Activated B cell treated with CpG ODN at 0.5 μM for 24 hours (primary cell): ENCODE measurements at regions of chr2 and their contacts with region 1.

Region 1: DNA sequence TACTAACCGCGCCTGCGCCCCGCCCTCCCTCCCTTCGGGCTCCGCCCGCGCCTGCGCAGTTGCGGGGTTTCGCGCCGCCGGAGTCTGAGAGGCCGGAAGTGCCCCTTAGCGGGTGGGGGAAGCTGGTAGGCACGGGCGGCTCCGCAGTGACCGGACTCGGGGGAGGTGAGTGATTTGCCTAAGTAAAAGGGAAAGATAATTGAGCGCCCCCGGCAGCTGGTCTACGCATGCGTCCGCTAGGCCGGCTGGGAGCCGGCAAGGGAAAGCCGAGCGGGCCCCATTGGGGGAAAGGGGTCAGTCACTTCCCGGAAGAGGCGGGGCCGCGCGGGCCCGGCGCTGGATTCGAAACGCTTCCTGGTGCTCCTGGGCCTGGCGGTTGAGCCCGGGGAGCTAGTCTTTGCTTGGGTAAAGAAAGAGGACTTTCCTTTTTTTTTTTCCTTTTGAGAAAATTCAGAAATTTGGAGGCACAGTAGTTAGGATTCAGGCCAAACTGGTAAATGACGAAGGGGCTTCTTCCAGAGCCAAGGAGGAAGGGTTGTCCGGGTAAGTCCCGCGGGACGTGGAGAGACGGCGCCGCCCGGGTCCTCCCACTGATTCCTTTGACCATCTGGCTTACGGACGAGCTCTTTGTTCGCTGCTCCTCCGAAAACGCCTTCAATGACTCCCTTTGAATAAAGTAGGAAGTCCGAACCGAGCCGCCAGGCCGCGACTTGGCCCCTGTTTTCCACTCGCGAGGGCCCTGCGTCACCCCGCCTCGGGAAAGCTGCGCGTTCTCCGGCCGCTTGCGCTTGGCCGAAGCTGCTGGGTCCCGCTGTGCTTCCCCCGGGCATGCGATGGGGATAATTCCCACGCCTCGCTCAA is at the starts of genes GEN1 and SMC6:
- DNase-seq: peak; percentile 90
- ATAC-seq: peak; percentile 83
- H3K4me3 Mint-ChIP-seq: peak within 1 kb of the TSS; percentile 95
- H3K27ac Mint-ChIP-seq: peak within 1 kb of the TSS; percentile 95
- H3K4me1 Mint-ChIP-seq: peaks cover 61% of the 10 kb centered on the region
- H3K27me3 Mint-ChIP-seq: no peaks in the 10 kb centered on the region
- CTCF ChIP-seq: no peak
- total RNA-seq, gene GEN1: 141 and 163 TPM in 2 replicates
- total RNA-seq, gene SMC6: 121 and 127 TPM in 2 replicates

Region 2: DNA sequence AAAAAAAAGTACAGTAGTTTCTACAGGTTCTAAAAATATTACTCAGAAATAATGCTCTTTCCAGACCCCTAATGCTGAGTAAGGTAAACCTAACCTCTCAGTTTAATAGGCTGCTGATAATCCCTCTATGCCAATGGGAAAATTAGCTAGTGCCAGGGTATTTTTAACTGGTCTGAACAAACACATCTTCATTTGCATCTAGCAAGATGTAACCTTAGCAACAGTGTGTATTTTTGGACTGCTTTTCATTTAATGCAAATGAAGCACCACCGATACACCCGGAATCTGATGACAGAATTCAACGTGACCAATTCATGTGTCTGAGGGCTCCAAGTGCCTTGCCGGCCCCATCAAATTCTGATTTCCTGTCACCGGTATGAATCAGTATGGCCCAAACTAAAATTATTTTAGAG is 1041.0 kb before region 1 on chr2:
- CTCF ChIA-PET with region 1: no interaction called
- POLR2A ChIA-PET with region 1: no interaction called
- intact Hi-C with region 1: loop called (anchors 5 kb)
- DNase-seq: no peak
- ATAC-seq: peak; percentile 80
- H3K4me3 Mint-ChIP-seq: peak overlapping the region; percentile 72
- H3K27ac Mint-ChIP-seq: peak overlapping the region; percentile 90
- H3K4me1 Mint-ChIP-seq: peaks cover 58% of the 10 kb centered on the region
- H3K27me3 Mint-ChIP-seq: no peaks in the 10 kb centered on the region
- CTCF ChIP-seq: no peak

Region 3: DNA sequence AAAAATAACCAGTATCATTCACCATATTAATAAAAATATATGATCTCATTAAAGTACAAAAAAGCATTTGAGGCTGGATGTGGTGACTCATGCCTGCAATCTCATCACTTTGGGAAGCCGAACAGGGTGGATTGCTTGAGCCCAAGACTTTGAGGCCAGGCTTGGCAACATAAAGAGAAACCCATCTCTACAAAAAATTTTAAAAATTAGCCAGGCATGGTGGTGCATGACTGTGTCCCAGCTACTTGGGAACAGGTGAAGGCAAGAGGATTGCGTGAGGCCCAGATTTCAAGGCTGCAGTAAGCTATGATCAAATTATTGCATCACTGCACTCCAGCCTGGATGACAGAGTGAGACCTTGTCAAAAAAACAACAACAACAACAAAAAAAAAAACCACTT is 311.7 kb before region 1 on chr2:
- CTCF ChIA-PET with region 1: no interaction called
- POLR2A ChIA-PET with region 1: no interaction called
- intact Hi-C with region 1: no loop called
- DNase-seq: no peak
- ATAC-seq: no peak
- H3K4me3 Mint-ChIP-seq: no peak overlapping the region
- H3K27ac Mint-ChIP-seq: no peak overlapping the region
- H3K4me1 Mint-ChIP-seq: no peaks in the 10 kb centered on the region
- H3K27me3 Mint-ChIP-seq: peaks cover 12% of the 10 kb centered on the region
- CTCF ChIP-seq: no peak

Region 4: GRCh38 chr2:17719562-17720371 is 34.3 kb before region 1 on chr2:
- CTCF ChIA-PET with region 1: interaction called, 6 read pairs
- POLR2A ChIA-PET with region 1: no interaction called
- intact Hi-C with region 1: loop called (anchors 5 kb)
- DNase-seq: no peak
- ATAC-seq: peak; percentile 70
- H3K4me3 Mint-ChIP-seq: no peak overlapping the region
- H3K27ac Mint-ChIP-seq: peak overlapping the region; percentile 78
- H3K4me1 Mint-ChIP-seq: peaks cover 3% of the 10 kb centered on the region
- H3K27me3 Mint-ChIP-seq: no peaks in the 10 kb centered on the region
- CTCF ChIP-seq: peak; percentile 44

Region 5: GRCh38 chr2:17771956-17772355 is 17.9 kb after region 1 on chr2:
- CTCF ChIA-PET with region 1: no interaction called
- POLR2A ChIA-PET with region 1: interaction called, 10 read pairs
- intact Hi-C with region 1: loop called (anchors 2 kb)
- DNase-seq: no peak
- ATAC-seq: no peak
- H3K4me3 Mint-ChIP-seq: no peak overlapping the region
- H3K27ac Mint-ChIP-seq: no peak overlapping the region
- H3K4me1 Mint-ChIP-seq: no peaks in the 10 kb centered on the region
- H3K27me3 Mint-ChIP-seq: no peaks in the 10 kb centered on the region
- CTCF ChIP-seq: no peak

Region 6: DNA sequence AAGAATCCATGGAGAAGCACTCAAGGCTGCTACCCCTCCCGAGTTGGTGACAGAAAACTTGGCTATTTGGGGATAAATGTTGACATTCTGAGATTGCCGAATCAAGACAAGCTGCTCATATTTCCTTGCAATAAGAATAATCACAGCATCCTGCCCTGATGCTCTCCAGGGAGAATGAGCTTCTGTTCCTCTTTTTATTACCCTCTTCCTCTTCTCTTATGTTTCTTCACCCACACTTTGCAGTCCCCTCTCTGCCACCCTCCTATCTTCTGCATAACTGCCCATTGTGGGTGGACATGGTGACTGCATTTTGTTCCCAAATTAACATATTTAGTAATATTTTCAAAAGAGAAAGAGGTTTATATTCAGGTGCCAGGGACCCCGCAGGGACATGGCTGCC is 50.3 kb after region 1 on chr2:
- CTCF ChIA-PET with region 1: interaction called, 4 read pairs
- POLR2A ChIA-PET with region 1: interaction called, 118 read pairs
- intact Hi-C with region 1: loop called (anchors 1 kb)
- DNase-seq: no peak
- ATAC-seq: peak; percentile 82
- H3K4me3 Mint-ChIP-seq: peak overlapping the region; percentile 76
- H3K27ac Mint-ChIP-seq: peak overlapping the region; percentile 97
- H3K4me1 Mint-ChIP-seq: peaks cover 84% of the 10 kb centered on the region
- H3K27me3 Mint-ChIP-seq: no peaks in the 10 kb centered on the region
- CTCF ChIP-seq: no peak

Region 7: DNA sequence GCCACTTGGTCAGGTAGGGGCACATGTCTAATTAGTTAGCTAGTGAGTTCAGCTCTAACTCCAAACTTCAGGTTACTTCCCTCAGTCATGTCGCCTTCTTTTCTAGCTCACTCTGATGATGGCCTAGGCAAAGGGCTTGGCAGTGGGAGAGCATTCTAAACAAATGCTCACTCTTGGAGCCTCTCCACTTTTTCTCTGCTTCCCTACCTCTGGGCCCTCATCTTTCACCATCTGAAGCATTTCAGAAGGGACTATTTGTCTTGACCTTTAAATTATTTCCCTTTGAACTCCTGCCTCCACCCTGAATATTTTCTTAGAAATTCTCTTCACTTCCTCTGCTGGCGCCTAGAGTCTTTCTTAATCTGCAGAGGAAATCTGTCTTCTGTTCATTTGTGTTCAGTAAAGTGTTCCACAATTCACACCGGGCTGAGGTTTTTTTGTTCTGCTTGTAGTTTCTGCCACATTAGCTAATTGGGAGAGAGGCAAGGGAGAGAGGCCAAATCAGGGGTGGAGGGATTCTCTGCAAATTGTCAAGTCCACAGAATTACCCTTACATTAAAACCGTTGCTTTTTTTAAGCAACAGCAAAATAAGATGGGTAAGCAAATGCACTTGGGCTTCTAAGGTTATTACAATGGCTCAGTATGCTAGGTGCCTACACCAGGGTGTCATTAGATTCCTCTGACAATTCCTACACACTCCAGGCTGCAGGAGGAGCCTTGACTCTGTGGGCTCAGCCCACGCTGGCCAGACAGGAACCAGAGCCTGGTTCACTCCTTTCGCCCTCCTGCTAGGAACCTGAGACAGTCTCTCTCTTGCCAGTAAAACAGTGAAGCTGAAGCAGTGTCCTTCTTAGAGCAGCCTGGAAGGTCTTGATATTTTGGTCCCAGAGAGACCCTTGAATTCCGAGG is 67.8 kb after region 1 on chr2:
- CTCF ChIA-PET with region 1: no interaction called
- POLR2A ChIA-PET with region 1: interaction called, 25 read pairs
- intact Hi-C with region 1: loop called (anchors 2 kb)
- DNase-seq: no peak
- ATAC-seq: peak; percentile 29
- H3K4me3 Mint-ChIP-seq: peak overlapping the region; percentile 42
- H3K27ac Mint-ChIP-seq: peak overlapping the region; percentile 88
- H3K4me1 Mint-ChIP-seq: peaks cover 84% of the 10 kb centered on the region
- H3K27me3 Mint-ChIP-seq: no peaks in the 10 kb centered on the region
- CTCF ChIP-seq: no peak

Region 8: DNA sequence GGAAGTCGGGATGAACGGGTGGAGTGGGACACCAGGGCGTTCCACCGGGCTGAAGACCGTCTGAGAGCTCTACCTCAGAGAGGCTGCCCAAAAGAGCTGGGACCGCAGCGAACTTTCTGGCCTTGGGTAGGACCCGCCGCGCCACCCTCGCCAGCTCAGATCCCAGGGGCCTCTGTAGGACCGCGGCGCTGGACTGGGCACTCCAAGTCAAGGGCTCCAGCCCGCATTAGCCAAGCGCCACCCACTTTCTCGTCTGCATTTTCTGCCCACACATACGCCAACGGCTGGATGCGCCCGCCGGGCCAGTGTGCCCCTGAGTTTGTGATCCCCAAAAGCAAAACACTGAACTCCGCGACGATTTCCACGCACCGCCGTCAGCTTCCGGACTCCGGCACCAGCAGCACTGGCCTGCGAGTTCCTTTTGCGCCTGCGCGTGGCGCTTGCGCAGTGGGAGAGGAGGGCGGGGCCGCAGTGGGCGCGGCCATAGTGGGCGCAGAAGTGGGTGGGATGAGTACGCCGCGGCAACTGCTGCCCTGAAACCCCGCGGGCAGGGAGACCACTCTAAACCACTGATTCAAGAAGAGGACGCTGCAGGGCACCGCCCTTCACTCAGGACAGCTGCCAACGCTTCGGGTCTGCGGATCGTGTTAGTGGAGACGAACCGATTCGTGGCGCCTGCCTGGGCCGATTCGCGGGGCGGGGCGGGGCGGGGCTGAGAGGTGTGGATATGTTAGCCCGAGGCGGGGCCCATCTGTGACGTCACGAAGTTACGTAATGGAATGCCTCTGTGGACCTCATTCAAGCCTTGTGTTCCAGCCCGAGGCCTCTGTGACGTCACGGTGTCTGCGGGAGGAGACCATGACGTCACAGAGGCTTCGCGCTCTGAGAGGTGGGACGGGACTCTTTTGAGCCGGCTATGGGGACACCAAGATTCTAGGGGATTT is 1593.9 kb after region 1 on chr2:
- CTCF ChIA-PET with region 1: no interaction called
- POLR2A ChIA-PET with region 1: no interaction called
- intact Hi-C with region 1: loop called (anchors 5 kb)
- DNase-seq: peak; percentile 100
- ATAC-seq: peak; percentile 89
- H3K4me3 Mint-ChIP-seq: peak overlapping the region; percentile 98
- H3K27ac Mint-ChIP-seq: peak overlapping the region; percentile 98
- H3K4me1 Mint-ChIP-seq: peaks cover 35% of the 10 kb centered on the region
- H3K27me3 Mint-ChIP-seq: peaks cover 28% of the 10 kb centered on the region
- CTCF ChIP-seq: no peak